GM13977 (cell line): ENCODE measurements at regions of chr11 and their contacts with region 1.

Region 1: GRCh38 chr11:94504689-94505293 is 7.5 kb upstream of the C11orf97 start:
- DNase-seq: peak; percentile 48
- CTCF ChIP-seq: peak; percentile 51

Region 2: GRCh38 chr11:94171693-94172440 is 332.9 kb before region 1 on chr11:
- in situ Hi-C with region 1: loop called (anchors 10 kb)
- DNase-seq: peak; percentile 36
- CTCF ChIP-seq: peak; percentile 82

Region 3: GRCh38 chr11:94271885-94272372 is 232.9 kb before region 1 on chr11:
- in situ Hi-C with region 1: no loop called
- DNase-seq: peak; percentile 38
- CTCF ChIP-seq: no peak

Region 4: DNA sequence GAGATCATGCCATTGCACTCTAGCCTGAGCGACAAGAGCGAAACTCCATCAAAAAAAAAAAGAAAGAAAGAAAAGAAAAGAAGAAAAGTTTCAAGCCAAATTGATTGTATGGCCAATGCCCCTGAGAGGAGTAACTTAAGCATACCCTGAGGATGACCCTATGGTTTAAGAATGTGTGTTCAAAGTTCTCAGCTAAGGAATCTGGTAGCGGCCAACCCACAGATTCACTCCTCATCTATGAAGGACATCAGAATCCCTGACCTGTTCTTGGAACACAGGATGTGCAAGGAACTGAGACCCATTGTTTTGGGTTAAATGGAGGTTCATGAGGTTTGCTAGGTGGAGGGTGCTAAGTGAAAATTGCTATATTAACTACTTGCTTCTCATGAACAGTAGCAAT is 182.3 kb before region 1 on chr11:
- in situ Hi-C with region 1: loop called (anchors 5 kb)
- DNase-seq: no peak
- CTCF ChIP-seq: no peak